ENCODE measurements at regions of chr5 and their contacts with region 1.

Region 1: GRCh38 chr5:130528474-130528873 is 624.2 kb downstream of the CHSY3 start:
- DNase-seq: peak; percentile 94
- H3K4me3 ChIP-seq: no peak overlapping the region
- H3K27ac ChIP-seq: peak overlapping the region; percentile 100
- H3K4me1 ChIP-seq: peaks cover 40% of the 10 kb centered on the region
- H3K27me3 ChIP-seq: no peaks in the 10 kb centered on the region
- CTCF ChIP-seq: no peak

Region 2: DNA sequence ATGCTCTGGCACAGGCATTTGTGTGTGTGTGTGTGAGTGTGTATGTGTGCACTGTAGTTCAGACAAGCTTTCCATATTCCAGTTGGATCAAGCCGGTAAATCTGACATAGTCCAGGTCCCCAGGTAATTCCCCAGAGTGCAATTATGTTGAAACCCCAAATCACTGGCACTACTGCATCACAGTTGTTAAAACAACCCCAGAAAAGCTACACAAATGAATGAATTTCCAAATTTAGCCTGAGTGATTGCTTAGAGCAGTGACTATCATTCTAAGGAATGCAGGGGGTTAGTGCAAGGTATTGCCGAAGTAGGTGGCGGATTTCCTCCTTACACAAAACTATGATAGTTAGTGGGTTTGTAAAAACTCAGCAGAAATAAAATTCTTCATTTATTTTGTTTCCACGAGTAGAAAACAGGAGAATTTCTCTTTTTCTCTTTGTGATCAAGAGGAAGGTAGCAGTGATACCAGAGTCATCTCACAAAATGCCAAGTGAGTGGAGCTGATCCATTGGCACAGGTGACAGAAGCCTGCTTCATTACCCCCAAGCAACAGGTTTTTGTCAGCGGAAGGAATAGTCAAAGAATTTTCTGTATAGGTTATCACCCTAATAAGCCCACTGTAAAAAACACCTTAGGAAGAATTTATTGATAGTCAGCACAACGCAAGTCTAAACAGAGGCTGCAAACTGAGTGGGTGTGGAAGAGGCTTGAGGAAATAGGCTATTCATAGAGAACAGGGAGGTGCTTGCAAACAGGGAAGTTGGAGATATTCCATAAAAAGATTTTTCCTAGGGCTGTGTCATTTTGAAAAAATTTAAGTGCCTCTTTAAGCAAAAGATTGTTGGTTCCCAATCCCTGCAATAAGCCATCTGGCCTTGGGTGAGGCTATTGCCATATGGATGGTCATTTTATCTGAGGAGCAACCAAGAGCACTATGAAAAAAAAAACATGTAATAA is 239.1 kb before region 1 on chr5:
- CTCF ChIA-PET with region 1: no interaction called
- dilution Hi-C with region 1: no loop called
- in situ Hi-C with region 1: no loop called
- intact Hi-C with region 1: loop called (anchors 5 kb)
- DNase-seq: peak; percentile 86
- H3K4me3 ChIP-seq: peak overlapping the region in 2 of 3 experiments; percentile 8 to 10
- H3K27ac ChIP-seq: peak overlapping the region; percentile 74
- H3K4me1 ChIP-seq: peaks cover 16% of the 10 kb centered on the region
- H3K27me3 ChIP-seq: no peaks in the 10 kb centered on the region
- CTCF ChIP-seq: no peak

Region 3: GRCh38 chr5:130496215-130496614 is 32.3 kb before region 1 on chr5:
- CTCF ChIA-PET with region 1: no interaction called
- dilution Hi-C with region 1: no loop called
- in situ Hi-C with region 1: no loop called
- intact Hi-C with region 1: loop called (anchors 2 kb)
- DNase-seq: peak; percentile 68
- H3K4me3 ChIP-seq: no peak overlapping the region
- H3K27ac ChIP-seq: peak overlapping the region; percentile 64
- H3K4me1 ChIP-seq: peaks cover 9% of the 10 kb centered on the region
- H3K27me3 ChIP-seq: no peaks in the 10 kb centered on the region
- CTCF ChIP-seq: no peak

Region 4: DNA sequence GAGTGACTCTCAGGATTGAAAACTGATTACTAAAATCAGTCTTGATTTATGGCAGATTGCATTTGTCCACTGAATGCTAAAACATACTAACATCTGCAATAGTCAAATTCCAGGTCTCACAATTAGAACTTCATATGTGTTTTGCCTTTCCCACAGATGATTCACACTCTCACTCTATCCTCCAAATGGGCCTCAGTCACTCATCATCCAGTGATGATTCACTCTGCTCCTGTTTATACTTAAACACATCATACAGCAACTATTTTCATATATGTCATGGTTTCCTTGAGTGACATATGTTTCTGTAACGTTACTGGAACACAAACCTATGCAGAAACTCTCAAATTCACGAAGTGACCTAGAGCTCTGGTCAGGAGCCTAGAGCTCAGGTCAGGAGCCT is 123.7 kb after region 1 on chr5:
- CTCF ChIA-PET with region 1: no interaction called
- dilution Hi-C with region 1: no loop called
- in situ Hi-C with region 1: no loop called
- intact Hi-C with region 1: loop called (anchors 5 kb)
- DNase-seq: peak; percentile 95
- H3K4me3 ChIP-seq: no peak overlapping the region
- H3K27ac ChIP-seq: peak overlapping the region; percentile 82
- H3K4me1 ChIP-seq: peaks cover 14% of the 10 kb centered on the region
- H3K27me3 ChIP-seq: no peaks in the 10 kb centered on the region
- CTCF ChIP-seq: no peak